ENCODE measurements at regions of chr13 and their contacts with region 1.

Region 1: GRCh38 chr13:25286969-25287961 is at the start of gene MTMR6:
- DNase-seq: peak; percentile 97
- H3K4me3 ChIP-seq: peak within 1 kb of the TSS; percentile 97
- H3K27ac ChIP-seq: peak within 1 kb of the TSS; percentile 92
- H3K4me1 ChIP-seq: peaks cover 39% of the 10 kb centered on the region
- CTCF ChIP-seq: peak; percentile 93
- total RNA-seq, gene MTMR6: 6.2 and 6.4 TPM in 2 replicates

Region 2: DNA sequence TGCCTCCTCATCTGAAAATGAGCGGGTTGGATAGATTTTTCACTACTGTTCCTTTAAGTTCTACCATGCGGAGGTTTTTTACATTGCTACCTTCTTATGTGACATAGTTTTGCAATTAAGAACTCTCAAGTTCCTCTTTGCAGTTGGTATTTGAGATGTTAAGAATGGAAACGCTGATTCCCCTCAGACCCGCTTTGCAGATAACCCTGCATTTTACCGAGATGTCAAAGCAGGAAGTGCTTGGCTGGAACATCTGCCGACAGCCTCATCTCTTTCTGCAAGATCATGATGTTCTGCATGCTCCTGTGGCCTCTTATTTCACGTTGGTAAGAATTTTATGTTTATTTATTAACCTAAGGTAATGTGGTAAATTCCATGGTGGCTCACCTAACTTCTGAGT is 168.9 kb before region 1 on chr13:
- CTCF ChIA-PET with region 1: no interaction called
- POLR2A ChIA-PET with region 1: no interaction called
- intact Hi-C with region 1: no loop called
- DNase-seq: peak; percentile 54
- H3K4me3 ChIP-seq: no peak overlapping the region
- H3K27ac ChIP-seq: peak overlapping the region; percentile 38
- H3K4me1 ChIP-seq: peaks cover 28% of the 10 kb centered on the region
- CTCF ChIP-seq: no peak

Region 3: GRCh38 chr13:25267715-25268114 is 19.6 kb before region 1 on chr13:
- CTCF ChIA-PET with region 1: no interaction called
- POLR2A ChIA-PET with region 1: interaction called, 10 read pairs
- intact Hi-C with region 1: no loop called
- DNase-seq: peak; percentile 33
- H3K4me3 ChIP-seq: no peak overlapping the region
- H3K27ac ChIP-seq: no peak overlapping the region
- H3K4me1 ChIP-seq: no peaks in the 10 kb centered on the region
- CTCF ChIP-seq: peak; percentile 61

Region 4: GRCh38 chr13:25301347-25302047 is 14.2 kb after region 1 on chr13 and contains the start of gene NUP58:
- CTCF ChIA-PET with region 1: no interaction called
- POLR2A ChIA-PET with region 1: interaction called, 8 read pairs
- intact Hi-C with region 1: loop called (anchors 1 kb)
- DNase-seq: peak; percentile 95
- H3K4me3 ChIP-seq: peak within 1 kb of the TSS; percentile 95
- H3K27ac ChIP-seq: peak within 1 kb of the TSS; percentile 76
- H3K4me1 ChIP-seq: peaks cover 27% of the 10 kb centered on the region
- CTCF ChIP-seq: no peak
- total RNA-seq, gene NUP58: 58.4 and 82.7 TPM in 2 replicates